Ascending aorta (tissue), 2 donors: ENCODE measurements at regions of chr18 and their contacts with region 1.

Region 1: GRCh38 chr18:11995445-11996189 is 14.3 kb downstream of the IMPA2 start:
- DNase-seq: peak in 1 of 2 donors; percentile 82
- H3K4me3 ChIP-seq: no peak overlapping the region
- H3K27ac ChIP-seq: no peak overlapping the region
- H3K4me1 ChIP-seq: peaks cover 0 to 2% of the 10 kb centered on the region in 2 donors
- H3K27me3 ChIP-seq: no peaks in the 10 kb centered on the region
- CTCF ChIP-seq: peak; percentile 54 to 88 (median 72)

Region 2: DNA sequence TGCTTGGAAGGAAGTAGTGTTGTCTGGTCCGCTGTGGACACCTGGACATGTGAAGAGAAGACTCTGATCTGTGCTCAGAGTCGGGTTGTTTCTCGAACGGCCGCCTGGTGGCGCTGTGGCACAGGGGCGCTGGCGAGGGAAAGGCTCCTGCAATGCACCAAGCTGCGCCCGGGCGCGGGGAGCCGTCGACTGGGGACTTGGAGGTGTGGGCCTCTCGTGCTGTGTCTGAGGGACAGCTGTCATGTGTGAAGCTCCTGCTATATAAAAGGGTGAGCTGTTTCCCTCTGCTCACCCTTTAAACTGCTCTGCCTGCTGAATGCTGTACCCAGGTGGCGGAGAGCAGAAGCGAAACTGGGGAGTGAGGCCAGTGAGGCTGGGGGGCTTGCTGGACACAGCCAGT is 262.6 kb before region 1 on chr18:
- intact Hi-C with region 1: loop called (anchors 5 kb)
- DNase-seq: peak in 1 of 2 donors; percentile 74
- H3K4me3 ChIP-seq: peak overlapping the region in 1 of 2 donors; percentile 36
- H3K27ac ChIP-seq: no peak overlapping the region
- H3K4me1 ChIP-seq: no peaks in the 10 kb centered on the region
- H3K27me3 ChIP-seq: no peaks in the 10 kb centered on the region
- CTCF ChIP-seq: peak; percentile 60 to 79 (median 66)

Region 3: GRCh38 chr18:11883153-11883552 is 112.5 kb before region 1 on chr18:
- intact Hi-C with region 1: no loop called
- DNase-seq: no peak
- H3K4me3 ChIP-seq: no peak overlapping the region
- H3K27ac ChIP-seq: no peak overlapping the region
- H3K4me1 ChIP-seq: no peaks in the 10 kb centered on the region
- H3K27me3 ChIP-seq: no peaks in the 10 kb centered on the region
- CTCF ChIP-seq: no peak

Region 4: DNA sequence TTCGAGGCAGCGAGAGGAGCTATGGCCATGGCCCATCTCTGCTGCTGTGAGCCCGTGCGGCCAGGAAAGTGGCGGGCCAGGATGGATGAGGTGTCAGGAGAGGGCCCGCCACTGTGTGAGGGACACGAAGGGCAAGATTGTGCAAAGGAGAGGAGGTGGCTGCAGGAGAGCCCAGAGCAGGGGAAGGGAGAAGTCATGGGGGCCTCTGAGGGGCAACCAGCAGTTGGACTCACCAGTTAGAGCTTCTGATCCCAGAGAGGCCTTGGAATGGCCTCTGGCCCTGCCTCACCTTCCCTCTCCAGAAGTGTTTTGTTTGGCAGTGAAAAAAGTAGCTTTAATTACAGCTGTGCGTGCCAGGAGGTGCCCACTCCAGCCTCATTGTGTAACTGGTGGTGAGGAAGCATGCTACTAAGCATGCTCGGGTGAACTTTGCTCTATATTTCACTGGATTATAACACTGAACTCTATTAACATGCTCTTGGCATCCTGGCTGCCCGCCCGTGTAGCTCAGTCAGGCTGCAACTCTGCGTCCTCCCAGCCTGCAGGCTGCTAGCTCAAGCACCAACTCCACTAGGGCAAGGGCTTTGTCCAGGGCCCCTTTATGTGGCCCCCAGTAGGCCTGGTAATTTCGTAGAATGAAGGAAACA is 19.9 kb after region 1 on chr18:
- intact Hi-C with region 1: no loop called
- DNase-seq: no peak
- H3K4me3 ChIP-seq: no peak overlapping the region
- H3K27ac ChIP-seq: no peak overlapping the region
- H3K4me1 ChIP-seq: no peaks in the 10 kb centered on the region
- H3K27me3 ChIP-seq: no peaks in the 10 kb centered on the region
- CTCF ChIP-seq: no peak

Region 5: GRCh38 chr18:12027046-12027445 is 31.4 kb after region 1 on chr18:
- intact Hi-C with region 1: no loop called
- DNase-seq: no peak
- H3K4me3 ChIP-seq: no peak overlapping the region
- H3K27ac ChIP-seq: no peak overlapping the region
- H3K4me1 ChIP-seq: no peaks in the 10 kb centered on the region
- H3K27me3 ChIP-seq: no peaks in the 10 kb centered on the region
- CTCF ChIP-seq: no peak